ENCODE measurements at regions of chr7 and their contacts with region 1.

Region 1: GRCh38 chr7:139230774-139231512 is at the start of gene UBN2:
- DNase-seq: peak; percentile 98 to 99
- ATAC-seq: peak; percentile 99
- H3K4me3 ChIP-seq: peak within 1 kb of the TSS; percentile 80 to 84
- H3K27ac ChIP-seq: peak within 1 kb of the TSS; percentile 67 to 81
- H3K4me1 ChIP-seq: peaks cover 0 to 2% of the 10 kb centered on the region in 2 donors
- H3K27me3 ChIP-seq: no peaks in the 10 kb centered on the region
- total RNA-seq, gene UBN2: 22.6 to 30.6 TPM

Region 2: DNA sequence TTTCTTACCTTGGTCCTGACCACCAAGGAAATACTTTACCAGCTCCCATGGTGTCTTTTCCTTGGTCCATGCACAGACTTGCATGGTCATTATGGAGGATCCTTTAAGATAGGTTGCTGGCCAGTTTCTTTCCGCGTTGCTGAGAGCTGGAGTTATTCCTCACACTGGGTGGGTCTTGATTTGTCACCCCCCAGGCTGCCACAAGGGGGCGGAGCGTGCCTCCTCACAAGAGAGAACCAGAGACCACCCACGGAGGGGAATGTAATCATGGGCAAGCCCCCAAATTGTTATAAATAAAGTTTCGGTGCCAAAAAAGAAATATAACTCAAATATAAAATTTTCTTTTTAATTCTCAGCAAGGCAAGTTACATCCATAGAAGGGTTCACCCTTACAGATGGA is 781.4 kb before region 1 on chr7:
- intact Hi-C with region 1: no loop called
- DNase-seq: no peak
- ATAC-seq: no peak
- H3K4me3 ChIP-seq: no peak overlapping the region
- H3K27ac ChIP-seq: no peak overlapping the region
- H3K4me1 ChIP-seq: no peaks in the 10 kb centered on the region
- H3K27me3 ChIP-seq: no peaks in the 10 kb centered on the region

Region 3: DNA sequence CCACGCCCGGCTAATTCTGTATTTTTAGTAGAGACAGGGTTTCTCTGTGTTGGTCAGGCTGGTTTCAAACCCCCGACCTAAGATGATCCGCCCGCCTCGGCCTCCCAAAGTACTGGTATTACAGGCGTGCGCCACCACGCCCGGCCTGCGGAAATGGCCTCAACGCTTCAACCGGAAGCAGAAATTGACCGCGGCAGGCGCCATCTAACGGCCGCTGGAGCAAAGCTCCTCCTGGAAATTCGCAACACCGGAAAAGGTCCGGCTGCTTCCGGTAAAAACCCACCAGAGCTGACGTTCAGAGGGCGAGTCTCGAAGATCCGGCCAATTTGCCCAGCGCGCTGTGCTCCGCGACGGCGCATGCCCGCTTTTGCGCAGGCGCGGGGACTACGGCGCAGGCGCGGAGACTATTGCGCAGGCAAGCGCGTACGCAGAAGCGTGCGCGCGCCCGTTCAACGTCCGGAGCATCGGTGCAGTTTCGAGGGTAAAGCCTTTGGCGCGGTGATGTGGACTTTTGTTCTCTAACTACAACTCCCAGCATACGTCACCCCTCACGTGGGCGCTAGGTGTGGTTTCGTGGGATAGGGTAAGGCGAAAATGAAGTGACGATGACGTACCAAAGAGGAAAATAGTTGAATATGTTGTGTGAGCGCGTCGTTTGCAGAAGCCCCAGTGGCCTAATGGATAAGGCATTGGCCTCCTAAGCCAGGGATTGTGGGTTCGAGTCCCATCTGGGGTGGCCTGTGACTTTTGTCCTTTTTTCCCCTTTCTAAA is 109.3 kb after region 1 on chr7:
- intact Hi-C with region 1: loop called in 1 of 2 experiments (anchors 2 kb)
- DNase-seq: peak; percentile 98 to 99
- ATAC-seq: peak; percentile 94
- H3K4me3 ChIP-seq: peak overlapping the region; percentile 58 to 63
- H3K27ac ChIP-seq: peak overlapping the region; percentile 87 to 95
- H3K4me1 ChIP-seq: no peaks in the 10 kb centered on the region
- H3K27me3 ChIP-seq: no peaks in the 10 kb centered on the region

Region 4: DNA sequence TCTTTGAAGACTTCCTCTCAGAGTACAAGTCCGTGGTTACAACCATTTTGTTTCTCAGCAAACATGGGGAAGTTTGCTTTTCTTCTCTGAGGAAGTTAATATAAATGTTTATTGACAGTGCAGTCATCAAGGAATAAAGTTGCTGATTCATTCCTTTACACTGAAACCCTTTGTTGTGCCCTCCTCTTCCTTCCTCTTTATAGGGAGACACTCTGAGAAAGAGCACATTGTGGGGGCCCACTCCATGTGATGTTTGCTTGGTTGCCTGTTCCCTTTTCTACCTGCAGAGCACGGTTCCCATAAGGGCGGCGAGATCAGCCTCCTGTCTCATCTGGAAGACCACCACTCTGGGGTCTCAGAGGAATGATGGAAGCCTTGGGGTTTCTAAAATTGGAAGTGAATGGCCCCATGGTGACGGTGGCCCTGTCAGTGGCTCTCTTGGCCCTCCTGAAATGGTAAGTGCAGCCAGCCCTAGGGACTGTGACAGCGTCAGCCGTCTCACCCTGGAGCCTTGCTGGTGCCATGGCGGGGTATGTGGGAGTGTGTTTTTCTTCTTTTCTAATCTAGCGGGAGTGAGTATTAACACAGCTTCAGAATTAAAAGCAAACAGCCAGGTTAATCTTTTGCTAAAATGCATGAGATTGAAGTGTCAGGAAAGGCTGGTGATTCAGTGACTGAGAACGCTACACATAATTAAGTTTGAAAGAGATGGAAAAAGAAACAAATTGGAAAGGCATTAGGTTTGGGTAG is 598.3 kb after region 1 on chr7 and contains the start of gene TBXAS1:
- intact Hi-C with region 1: no loop called
- DNase-seq: peak in 1 of 2 donors; percentile 54
- ATAC-seq: no peak
- H3K4me3 ChIP-seq: no peak within 1 kb of the TSS
- H3K27ac ChIP-seq: no peak within 1 kb of the TSS
- H3K4me1 ChIP-seq: no peaks in the 10 kb centered on the region
- H3K27me3 ChIP-seq: no peaks in the 10 kb centered on the region
- total RNA-seq, gene TBXAS1: 22.1 to 24.5 TPM

Measured in aorta (tissue), 5 donors.